AG04449 (cell line): ENCODE measurements at regions of chr3 and their contacts with region 1.

Region 1: DNA sequence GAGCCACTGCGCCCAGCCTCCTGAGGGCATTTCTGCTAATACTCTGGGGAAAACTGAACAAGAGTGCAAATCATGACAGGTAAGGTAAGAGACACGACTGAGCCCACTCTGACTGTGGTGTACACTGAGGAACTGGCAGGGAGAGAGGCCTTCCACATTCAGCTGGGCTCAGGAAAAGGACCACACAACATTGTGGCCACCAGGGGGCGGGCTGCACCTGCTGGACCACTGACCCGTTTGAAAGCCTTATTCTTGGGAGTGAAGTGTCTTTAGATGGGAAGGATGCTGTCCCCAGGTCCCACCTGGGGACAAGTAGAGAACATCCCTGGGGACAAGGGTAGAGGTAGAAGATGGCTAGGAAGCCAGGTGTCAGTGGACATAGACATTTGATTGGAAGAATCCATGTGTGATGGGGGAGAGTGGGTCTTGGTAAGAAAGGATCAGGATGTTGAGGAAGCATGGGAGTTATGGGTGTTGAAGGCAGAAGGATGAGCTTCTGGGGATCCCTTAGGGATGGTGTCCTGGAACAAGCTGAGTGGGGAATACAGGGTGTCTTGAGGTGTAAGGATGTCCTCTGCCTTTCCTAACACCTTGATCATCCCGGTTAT is 6.2 kb upstream of the CTDSPL start:
- DNase-seq: no peak
- H3K4me3 ChIP-seq: no peak overlapping the region
- CTCF ChIP-seq: peak; percentile 94

Region 2: DNA sequence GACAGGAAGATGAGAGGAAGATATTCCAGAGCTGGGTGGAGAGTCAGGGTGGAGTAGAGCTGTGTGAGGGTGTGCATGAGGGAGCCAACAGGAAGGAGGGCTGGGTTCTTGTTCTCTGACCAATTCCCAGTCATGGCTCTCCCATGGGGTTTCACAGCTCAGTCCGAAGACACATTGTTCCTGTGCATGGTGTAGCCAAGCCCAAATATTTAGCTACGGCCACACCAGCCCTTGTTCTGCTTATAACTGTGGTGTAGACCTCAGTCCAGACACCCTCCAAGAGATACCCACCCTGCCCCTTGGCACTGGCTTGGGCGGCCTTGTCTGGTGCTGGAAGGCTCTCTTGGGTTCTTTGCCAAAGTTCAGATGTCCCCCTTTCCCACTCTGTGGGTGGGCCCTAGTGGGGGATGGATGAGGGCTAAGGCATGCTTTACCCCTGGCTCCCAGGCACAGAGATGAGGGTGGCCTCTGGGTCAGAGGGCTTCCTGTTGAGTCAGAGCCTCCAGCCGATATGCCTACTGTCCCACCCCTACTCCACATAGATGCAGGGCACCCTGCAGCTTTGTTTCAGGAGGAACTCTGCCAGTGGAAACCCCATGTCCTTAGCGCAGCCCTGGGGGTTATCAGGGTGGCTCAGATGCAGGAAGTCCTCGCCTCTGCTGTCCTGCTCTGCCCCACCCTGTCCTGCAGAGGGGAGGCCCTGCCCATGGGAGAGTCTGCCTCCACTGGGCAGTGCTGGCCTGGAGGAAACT is 265.0 kb before region 1 on chr3:
- CTCF ChIA-PET with region 1: no interaction called
- POLR2A ChIA-PET with region 1: no interaction called
- DNase-seq: no peak
- H3K4me3 ChIP-seq: no peak overlapping the region
- CTCF ChIP-seq: no peak

Region 3: GRCh38 chr3:37956723-37957528 is 101.5 kb after region 1 on chr3:
- CTCF ChIA-PET with region 1: interaction called, 12 read pairs
- POLR2A ChIA-PET with region 1: no interaction called
- DNase-seq: no peak
- H3K4me3 ChIP-seq: no peak overlapping the region
- CTCF ChIP-seq: no peak

Region 4: DNA sequence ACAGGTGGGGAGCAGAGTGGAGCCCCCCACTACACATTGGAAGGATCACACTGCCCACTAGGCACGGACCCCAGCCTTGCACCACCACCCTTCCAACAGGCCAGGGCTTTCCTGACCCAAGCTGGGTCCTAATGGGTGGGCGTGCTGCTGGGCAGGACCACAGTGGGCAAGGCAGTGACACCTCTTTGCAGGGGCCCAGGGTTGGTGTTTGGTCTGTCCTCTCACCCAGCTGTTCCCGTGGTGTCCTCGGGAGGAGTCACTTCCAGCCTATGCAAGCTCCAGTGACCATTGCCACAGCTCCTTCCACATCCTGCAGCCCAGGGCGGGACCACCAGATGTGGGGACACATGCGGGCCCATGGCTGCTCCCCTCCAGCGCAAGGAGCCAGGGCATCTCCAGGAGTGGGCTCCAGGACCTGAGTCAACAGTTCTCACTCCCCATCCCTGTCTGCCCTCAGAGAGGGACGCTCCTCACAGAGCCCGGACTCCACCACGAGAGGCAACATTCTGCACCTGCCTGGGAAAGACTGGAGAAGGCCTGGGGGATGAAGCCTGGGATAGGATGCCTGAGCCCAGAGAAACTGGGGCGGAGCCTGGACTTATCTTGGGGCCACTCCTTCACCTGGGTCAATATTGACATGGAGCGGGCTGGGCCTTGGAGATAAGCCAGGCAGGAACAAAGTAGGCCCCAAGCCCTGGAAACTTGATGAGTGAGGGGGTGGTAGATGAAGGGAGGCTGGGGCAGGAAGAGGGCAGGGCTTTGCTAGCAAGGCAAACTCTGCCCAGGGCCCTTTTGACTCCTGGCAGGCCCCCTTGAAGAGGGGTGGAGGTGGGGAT is 131.2 kb after region 1 on chr3:
- CTCF ChIA-PET with region 1: interaction called, 10 read pairs
- POLR2A ChIA-PET with region 1: no interaction called
- DNase-seq: no peak
- H3K4me3 ChIP-seq: no peak overlapping the region
- CTCF ChIP-seq: no peak